IMR-90 (cell line): ENCODE measurements at regions of chr1 and their contacts with region 1.

Region 1: DNA sequence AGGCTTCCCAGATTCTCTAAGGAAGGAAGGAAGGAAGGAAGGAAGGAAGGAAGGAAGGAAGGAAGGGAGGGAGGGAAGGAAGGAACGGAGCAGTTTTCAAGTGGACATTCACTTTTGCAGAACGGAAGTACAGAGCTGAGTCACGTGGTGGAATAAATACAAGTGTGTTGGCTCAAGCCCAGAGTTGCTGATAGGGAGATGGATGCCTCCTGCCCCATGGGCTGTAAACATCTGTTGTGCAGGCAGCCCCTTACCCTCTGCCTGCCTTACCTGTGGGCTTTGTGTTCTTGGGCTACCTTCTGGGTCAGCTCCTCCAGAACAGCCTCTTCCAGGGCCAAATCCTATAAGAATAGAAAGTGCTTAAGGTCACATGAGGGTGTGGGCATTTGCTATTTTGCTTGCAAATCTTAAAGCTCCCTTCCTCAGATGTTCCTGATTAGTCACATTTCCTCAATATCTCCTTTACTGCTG is 121.7 kb downstream of the SMYD2 start:
- DNase-seq: peak; percentile 57
- ATAC-seq: no peak
- H3K4me3 ChIP-seq: no peak overlapping the region
- H3K27ac ChIP-seq: peak overlapping the region; percentile 27; the same call in 1 of the 2 replicates
- H3K4me1 ChIP-seq: peaks cover 18% of the 10 kb centered on the region
- H3K27me3 ChIP-seq: no peaks in the 10 kb centered on the region
- CTCF ChIP-seq: no peak
- POLR2A ChIP-seq: no peak
- RAD21 ChIP-seq: no peak

Region 2: GRCh38 chr1:214213136-214213535 is 189.5 kb before region 1 on chr1:
- CTCF ChIA-PET with region 1: no interaction called
- POLR2A ChIA-PET with region 1: no interaction called
- dilution Hi-C with region 1: no loop called
- in situ Hi-C with region 1: no loop called
- intact Hi-C with region 1: no loop called
- DNase-seq: peak; percentile 18
- ATAC-seq: peak; percentile 48
- H3K4me3 ChIP-seq: no peak overlapping the region
- H3K27ac ChIP-seq: no peak overlapping the region
- H3K4me1 ChIP-seq: no peaks in the 10 kb centered on the region; the same call in 1 of the 2 replicates
- H3K27me3 ChIP-seq: peaks cover 38% of the 10 kb centered on the region
- CTCF ChIP-seq: no peak
- POLR2A ChIP-seq: no peak
- RAD21 ChIP-seq: no peak

Region 3: DNA sequence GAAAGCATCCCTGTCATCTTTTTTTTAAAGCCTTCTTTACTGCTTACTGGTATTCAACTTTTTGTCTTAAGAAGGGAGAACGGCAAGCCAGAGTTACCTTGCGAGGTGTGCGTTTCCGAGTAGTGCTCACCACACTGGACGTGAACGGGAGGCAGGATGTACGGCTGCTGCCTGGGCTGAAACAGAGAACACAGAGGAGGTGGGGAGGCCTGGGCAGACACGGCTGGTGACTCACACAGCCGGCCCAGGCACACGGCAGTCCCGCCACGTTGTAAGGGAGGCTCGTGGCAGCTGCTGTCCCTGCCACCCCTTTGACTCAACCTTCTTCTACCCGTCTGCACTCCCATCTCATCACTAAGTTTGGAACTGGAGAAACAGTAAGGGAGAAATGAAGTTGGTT is 15.9 kb before region 1 on chr1:
- CTCF ChIA-PET with region 1: interaction called, 3 read pairs
- POLR2A ChIA-PET with region 1: interaction called, 10 read pairs
- dilution Hi-C with region 1: no loop called
- in situ Hi-C with region 1: no loop called
- intact Hi-C with region 1: no loop called
- DNase-seq: peak; percentile 42
- ATAC-seq: peak; percentile 51; the same call in 1 of the 2 replicates
- H3K4me3 ChIP-seq: no peak overlapping the region
- H3K27ac ChIP-seq: no peak overlapping the region
- H3K4me1 ChIP-seq: no peaks in the 10 kb centered on the region
- H3K27me3 ChIP-seq: no peaks in the 10 kb centered on the region
- CTCF ChIP-seq: no peak
- POLR2A ChIP-seq: no peak
- RAD21 ChIP-seq: no peak